Dorsolateral prefrontal cortex (tissue), 120 donors: ENCODE measurements at regions of chr12 and their contacts with region 1.

Region 1: GRCh38 chr12:53098982-53099651 is 1.6 kb downstream of the IGFBP6 start:
- DNase-seq: peak; percentile 80 to 90 (median 86)
- H3K4me3 ChIP-seq: peak overlapping the region in 42 of 59 donors; percentile 0 to 73 (median 65)
- H3K27ac ChIP-seq: peak overlapping the region in 57 of 59 donors; percentile 16 to 94 (median 82)
- H3K27me3 ChIP-seq: no peaks in the 10 kb centered on the region
- CTCF ChIP-seq: peak in 55 of 56 donors; percentile 90 to 99 (median 97)

Region 2: DNA sequence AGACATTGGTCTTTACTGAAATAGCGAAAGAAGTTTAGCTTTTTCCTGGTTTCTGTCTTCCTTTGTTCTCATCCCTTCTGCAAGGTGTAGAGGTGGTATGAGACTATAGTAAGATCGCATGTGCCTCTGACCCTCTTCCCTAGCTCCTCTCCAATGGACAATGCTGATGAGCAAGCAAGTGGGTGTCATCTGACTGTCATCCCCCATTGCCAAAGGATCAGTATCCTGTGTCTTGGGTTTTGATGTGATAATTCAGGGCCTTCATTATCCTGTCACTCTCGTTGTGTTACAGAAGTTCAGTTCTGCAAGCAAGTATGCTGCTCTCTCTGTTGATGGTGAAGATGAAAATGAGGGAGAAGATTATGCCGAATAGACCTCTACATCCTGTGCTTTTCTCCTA is 59.3 kb before region 1 on chr12:
- intact Hi-C with region 1: loop called in 1 of 2 experiments (anchors 2 kb)
- DNase-seq: no peak
- H3K4me3 ChIP-seq: no peak overlapping the region
- H3K27ac ChIP-seq: peak overlapping the region in 33 of 59 donors; percentile 22 to 86 (median 71)
- H3K27me3 ChIP-seq: no peaks in the 10 kb centered on the region
- CTCF ChIP-seq: no peak

Region 3: GRCh38 chr12:53065975-53066931 is 32.9 kb before region 1 on chr12:
- intact Hi-C with region 1: loop called (anchors 1 to 2 kb)
- DNase-seq: peak in 9 of 10 donors; percentile 61 to 83 (median 74)
- H3K4me3 ChIP-seq: no peak overlapping the region
- H3K27ac ChIP-seq: peak overlapping the region in 56 of 59 donors; percentile 4 to 97 (median 73)
- H3K27me3 ChIP-seq: no peaks in the 10 kb centered on the region
- CTCF ChIP-seq: peak; percentile 85 to 98 (median 93)

Region 4: DNA sequence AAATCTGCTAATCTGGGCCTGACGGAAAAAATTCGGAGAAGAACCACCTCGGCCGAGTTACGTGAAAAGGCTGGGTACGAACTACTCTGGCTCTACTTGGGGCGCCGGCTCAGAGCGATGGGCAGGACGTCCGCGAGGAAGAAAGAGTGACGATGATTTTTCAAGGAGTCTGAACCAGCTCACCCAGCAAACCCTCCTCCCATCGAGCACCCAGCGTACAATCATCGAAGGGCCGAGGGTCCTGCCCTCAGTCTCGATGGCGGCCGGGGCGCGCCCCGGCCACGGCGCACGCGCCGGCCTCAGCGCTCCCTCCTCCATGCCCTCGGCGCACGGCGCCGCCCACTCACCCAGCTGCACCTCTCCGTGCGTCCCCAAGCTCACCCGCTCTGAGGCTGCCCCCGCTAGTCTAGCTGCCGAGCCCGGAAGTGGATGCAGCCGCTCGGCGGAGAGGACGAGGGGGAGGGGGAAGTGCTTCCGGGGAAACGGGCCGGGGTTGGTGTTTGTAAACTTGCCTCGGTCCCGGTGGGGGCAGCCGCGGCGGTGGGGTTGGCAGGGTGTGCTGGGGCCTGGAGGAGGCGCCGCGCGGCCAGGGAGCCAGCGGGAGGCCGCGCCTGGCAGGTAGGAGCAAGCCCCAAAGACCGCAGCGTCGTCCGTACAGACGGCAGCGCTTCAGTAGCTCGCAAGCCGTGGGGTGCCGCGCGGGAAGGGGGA is 81.3 kb after region 1 on chr12 and contains the starts of genes CSAD and ZNF740:
- intact Hi-C with region 1: loop called in 1 of 2 experiments (anchors 5 kb)
- DNase-seq: peak; percentile 92 to 99 (median 98)
- H3K4me3 ChIP-seq: peak within 1 kb of the TSS; percentile 52 to 91 (median 79)
- H3K27ac ChIP-seq: peak within 1 kb of the TSS; percentile 78 to 98 (median 95)
- H3K27me3 ChIP-seq: no peaks in the 10 kb centered on the region
- CTCF ChIP-seq: peak in 15 of 56 donors; percentile 4 to 50 (median 15)
- total RNA-seq, gene CSAD: 28.2 to 90.7 (median 62.4) TPM
- total RNA-seq, gene ZNF740: 29.1 to 79.4 (median 48.6) TPM